CD8-positive, alpha-beta memory T cell (primary cell): ENCODE measurements at regions of chr2 and their contacts with region 1.

Region 1: GRCh38 chr2:237674731-237675276 is 47.4 kb downstream of the LRRFIP1 start:
- DNase-seq: peak; percentile 81 to 95 (median 92)
- H3K4me3 ChIP-seq: peak overlapping the region; percentile 70
- H3K4me3 Mint-ChIP-seq: peak overlapping the region; percentile 68 to 95 (median 91)
- H3K27ac ChIP-seq: peak overlapping the region; percentile 96
- H3K27ac Mint-ChIP-seq: peak overlapping the region; percentile 95 to 100 (median 100)
- H3K4me1 ChIP-seq: peaks cover 41% of the 10 kb centered on the region
- H3K4me1 Mint-ChIP-seq: peaks cover 45 to 51% (median 47%) of the 10 kb centered on the region in 3 donors
- H3K27me3 ChIP-seq: no peaks in the 10 kb centered on the region
- H3K27me3 Mint-ChIP-seq: peaks cover 0 to 6% of the 10 kb centered on the region in 2 donors

Region 2: GRCh38 chr2:237685408-237685807 is 10.6 kb after region 1 on chr2:
- CTCF ChIA-PET with region 1: interaction called, 295 read pairs
- POLR2A ChIA-PET with region 1: interaction called, 56 read pairs
- DNase-seq: no peak
- H3K4me3 ChIP-seq: no peak overlapping the region
- H3K4me3 Mint-ChIP-seq: no peak overlapping the region
- H3K27ac ChIP-seq: no peak overlapping the region
- H3K27ac Mint-ChIP-seq: peak overlapping the region in 6 of 8 donors; percentile 31 to 100 (median 99)
- H3K4me1 ChIP-seq: peaks cover 44% of the 10 kb centered on the region
- H3K4me1 Mint-ChIP-seq: peaks cover 40 to 51% (median 49%) of the 10 kb centered on the region in 3 donors
- H3K27me3 ChIP-seq: no peaks in the 10 kb centered on the region
- H3K27me3 Mint-ChIP-seq: peaks cover 0 to 1% of the 10 kb centered on the region in 2 donors

Region 3: GRCh38 chr2:237708065-237708398 is 33.2 kb after region 1 on chr2:
- CTCF ChIA-PET with region 1: interaction called, 295 read pairs
- POLR2A ChIA-PET with region 1: interaction called, 6 read pairs
- DNase-seq: no peak
- H3K4me3 ChIP-seq: no peak overlapping the region
- H3K4me3 Mint-ChIP-seq: peak overlapping the region in 1 of 7 donors; percentile 5
- H3K27ac ChIP-seq: no peak overlapping the region
- H3K27ac Mint-ChIP-seq: peak overlapping the region in 7 of 8 donors; percentile 32 to 97 (median 82)
- H3K4me1 ChIP-seq: peaks cover 53% of the 10 kb centered on the region
- H3K4me1 Mint-ChIP-seq: peaks cover 66 to 88% (median 71%) of the 10 kb centered on the region in 3 donors
- H3K27me3 ChIP-seq: no peaks in the 10 kb centered on the region
- H3K27me3 Mint-ChIP-seq: no peaks in the 10 kb centered on the region

Region 4: DNA sequence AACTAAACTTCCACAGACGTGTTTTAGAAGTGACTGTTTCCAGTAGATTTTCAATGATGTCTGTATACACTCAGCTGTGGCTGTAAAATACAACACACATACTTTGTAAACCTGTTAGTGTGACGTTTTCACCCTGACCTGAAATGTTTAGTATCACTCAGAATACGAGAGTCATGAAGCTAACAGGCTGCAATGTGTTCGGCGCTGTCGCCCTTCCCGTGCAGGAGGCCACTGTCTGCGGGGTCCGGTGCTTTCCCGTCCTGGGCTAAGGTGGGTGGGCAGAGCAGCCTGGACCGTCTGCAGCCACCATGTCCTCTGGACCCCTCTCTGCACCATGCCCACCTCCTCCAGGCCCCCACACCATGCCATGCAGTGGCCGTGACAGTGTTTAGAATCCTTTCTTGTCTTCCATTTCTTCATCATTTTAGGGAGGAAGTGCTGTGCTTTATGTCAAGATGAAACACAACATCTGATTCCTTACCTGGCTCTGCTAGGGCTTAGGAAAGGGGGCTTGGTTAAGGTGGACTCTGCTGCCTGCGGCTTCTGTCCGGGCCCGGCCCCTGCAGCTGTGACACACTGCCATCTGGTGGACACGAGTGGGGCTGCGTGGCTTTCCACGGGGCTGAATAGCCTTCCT is 69.9 kb after region 1 on chr2:
- CTCF ChIA-PET with region 1: interaction called, 268 read pairs
- POLR2A ChIA-PET with region 1: interaction called, 9 read pairs
- DNase-seq: peak; percentile 62 to 84 (median 72)
- H3K4me3 ChIP-seq: no peak overlapping the region
- H3K4me3 Mint-ChIP-seq: no peak overlapping the region
- H3K27ac ChIP-seq: no peak overlapping the region
- H3K27ac Mint-ChIP-seq: peak overlapping the region; percentile 47 to 92 (median 82)
- H3K4me1 ChIP-seq: no peaks in the 10 kb centered on the region
- H3K4me1 Mint-ChIP-seq: peaks cover 37 to 64% (median 45%) of the 10 kb centered on the region in 3 donors
- H3K27me3 ChIP-seq: no peaks in the 10 kb centered on the region
- H3K27me3 Mint-ChIP-seq: no peaks in the 10 kb centered on the region